Activated CD4-positive, alpha-beta T cell treated with anti-CD3 and anti-CD28 coated beads, Interleukin-2, amount 10 ng/mL, durations not matched to agents 24 days and 14 days (primary cell): ENCODE measurements at regions of chr6 and their contacts with region 1.

Region 1: DNA sequence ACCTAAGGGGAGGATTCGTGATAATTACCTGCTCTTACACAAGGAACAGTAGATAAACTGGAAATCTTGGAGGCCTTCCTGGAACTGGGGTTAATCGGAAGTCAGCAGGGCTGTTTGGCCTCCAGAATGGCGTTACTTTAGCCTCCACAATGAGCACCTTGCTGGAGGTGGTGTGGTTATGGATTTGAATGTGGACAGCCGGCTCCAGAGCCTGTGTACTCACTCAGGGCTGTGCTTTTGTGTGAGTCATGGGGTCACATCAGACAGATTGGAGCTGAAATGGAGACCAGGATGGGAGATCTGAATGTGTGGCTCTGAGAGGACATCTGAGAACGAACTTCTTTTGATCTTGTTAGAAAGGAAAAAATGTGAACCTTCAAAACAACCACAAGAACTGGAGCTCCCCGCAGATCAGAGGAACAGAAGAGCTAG is 30.4 kb downstream of the IGF2R start:
- DNase-seq: peak; percentile 58
- H3K4me3 Mint-ChIP-seq: peak overlapping the region; percentile 21
- H3K27ac Mint-ChIP-seq: peak overlapping the region; percentile 85
- H3K4me1 Mint-ChIP-seq: peaks cover 49% of the 10 kb centered on the region
- H3K27me3 Mint-ChIP-seq: no peaks in the 10 kb centered on the region

Region 2: DNA sequence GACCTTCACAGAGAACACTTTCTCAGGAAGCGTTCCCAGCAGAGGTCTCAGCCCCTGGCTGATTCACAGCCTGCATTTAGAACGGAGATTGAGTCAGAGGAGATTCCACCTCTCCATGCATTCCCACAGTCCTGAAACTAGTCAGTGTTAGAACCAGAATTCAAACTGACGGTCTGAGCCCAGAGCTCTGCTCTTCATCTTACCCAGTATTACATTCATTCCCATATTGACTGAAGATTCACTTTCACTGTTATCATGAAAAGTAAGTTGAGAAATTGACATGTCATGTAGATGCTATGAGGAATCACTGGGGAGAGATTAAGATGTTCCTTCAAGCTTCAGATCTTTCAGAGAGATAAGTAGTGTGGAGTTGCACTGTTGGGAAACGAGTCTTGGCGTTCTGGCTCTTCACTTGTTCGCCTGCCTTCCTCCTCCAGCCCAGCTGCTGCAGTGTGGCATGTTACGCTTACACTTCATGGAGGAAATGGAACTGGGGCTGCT is 80.2 kb before region 1 on chr6:
- intact Hi-C with region 1: no loop called
- DNase-seq: no peak
- H3K4me3 Mint-ChIP-seq: no peak overlapping the region
- H3K27ac Mint-ChIP-seq: no peak overlapping the region
- H3K4me1 Mint-ChIP-seq: peaks cover 2% of the 10 kb centered on the region
- H3K27me3 Mint-ChIP-seq: peaks cover 6% of the 10 kb centered on the region

Region 3: GRCh38 chr6:159968440-159969203 is 30.6 kb before region 1 on chr6 and contains the start of gene IGF2R:
- intact Hi-C with region 1: no loop called
- DNase-seq: peak; percentile 98
- H3K4me3 Mint-ChIP-seq: peak within 1 kb of the TSS; percentile 88
- H3K27ac Mint-ChIP-seq: peak within 1 kb of the TSS; percentile 91
- H3K4me1 Mint-ChIP-seq: peaks cover 37% of the 10 kb centered on the region
- H3K27me3 Mint-ChIP-seq: peaks cover 23% of the 10 kb centered on the region
- total RNA-seq, gene IGF2R: 75.1 and 77.9 TPM in 2 replicates

Region 4: GRCh38 chr6:160010067-160010466 is 10.8 kb after region 1 on chr6:
- intact Hi-C with region 1: loop called (anchors 2 kb)
- DNase-seq: no peak
- H3K4me3 Mint-ChIP-seq: no peak overlapping the region
- H3K27ac Mint-ChIP-seq: no peak overlapping the region
- H3K4me1 Mint-ChIP-seq: peaks cover 43% of the 10 kb centered on the region
- H3K27me3 Mint-ChIP-seq: no peaks in the 10 kb centered on the region